Activated CD8-positive, alpha-beta T cell treated with anti-CD3 and anti-CD28 coated beads for 36 hours (primary cell): ENCODE measurements at regions of chr1 and their contacts with region 1.

Region 1: GRCh38 chr1:244864253-244865027 is at the start of gene HNRNPU:
- DNase-seq: peak; percentile 97
- ATAC-seq: peak; percentile 80
- H3K4me3 Mint-ChIP-seq: peak within 1 kb of the TSS; percentile 95
- H3K27ac Mint-ChIP-seq: peak within 1 kb of the TSS; percentile 99
- H3K4me1 Mint-ChIP-seq: peaks cover 34% of the 10 kb centered on the region
- H3K27me3 Mint-ChIP-seq: no peaks in the 10 kb centered on the region
- CTCF ChIP-seq: peak; percentile 54
- total RNA-seq, gene HNRNPU: 469 to 474 TPM

Region 2: GRCh38 chr1:244768186-244768585 is 96.3 kb before region 1 on chr1:
- CTCF ChIA-PET with region 1: no interaction called
- POLR2A ChIA-PET with region 1: no interaction called
- intact Hi-C with region 1: no loop called
- DNase-seq: no peak
- ATAC-seq: no peak
- H3K4me3 Mint-ChIP-seq: no peak overlapping the region
- H3K27ac Mint-ChIP-seq: no peak overlapping the region
- H3K4me1 Mint-ChIP-seq: no peaks in the 10 kb centered on the region
- H3K27me3 Mint-ChIP-seq: peaks cover 5% of the 10 kb centered on the region
- CTCF ChIP-seq: no peak

Region 3: GRCh38 chr1:244835276-244836134 is 28.9 kb before region 1 on chr1 and contains the start of gene COX20:
- CTCF ChIA-PET with region 1: interaction called, 15 read pairs
- POLR2A ChIA-PET with region 1: interaction called, 554 read pairs
- intact Hi-C with region 1: loop called (anchors 1 kb)
- DNase-seq: peak; percentile 88
- ATAC-seq: peak; percentile 61
- H3K4me3 Mint-ChIP-seq: peak within 1 kb of the TSS; percentile 93
- H3K27ac Mint-ChIP-seq: peak within 1 kb of the TSS; percentile 98
- H3K4me1 Mint-ChIP-seq: peaks cover 38% of the 10 kb centered on the region
- H3K27me3 Mint-ChIP-seq: no peaks in the 10 kb centered on the region
- CTCF ChIP-seq: no peak
- total RNA-seq, gene COX20: 33.1 to 34.7 TPM

Region 4: GRCh38 chr1:244849189-244849866 is 15.1 kb before region 1 on chr1:
- CTCF ChIA-PET with region 1: interaction called, 12 read pairs
- POLR2A ChIA-PET with region 1: interaction called, 554 read pairs
- intact Hi-C with region 1: no loop called
- DNase-seq: no peak
- ATAC-seq: no peak
- H3K4me3 Mint-ChIP-seq: no peak overlapping the region
- H3K27ac Mint-ChIP-seq: peak overlapping the region; percentile 46
- H3K4me1 Mint-ChIP-seq: peaks cover 75% of the 10 kb centered on the region
- H3K27me3 Mint-ChIP-seq: no peaks in the 10 kb centered on the region
- CTCF ChIP-seq: no peak

Region 5: DNA sequence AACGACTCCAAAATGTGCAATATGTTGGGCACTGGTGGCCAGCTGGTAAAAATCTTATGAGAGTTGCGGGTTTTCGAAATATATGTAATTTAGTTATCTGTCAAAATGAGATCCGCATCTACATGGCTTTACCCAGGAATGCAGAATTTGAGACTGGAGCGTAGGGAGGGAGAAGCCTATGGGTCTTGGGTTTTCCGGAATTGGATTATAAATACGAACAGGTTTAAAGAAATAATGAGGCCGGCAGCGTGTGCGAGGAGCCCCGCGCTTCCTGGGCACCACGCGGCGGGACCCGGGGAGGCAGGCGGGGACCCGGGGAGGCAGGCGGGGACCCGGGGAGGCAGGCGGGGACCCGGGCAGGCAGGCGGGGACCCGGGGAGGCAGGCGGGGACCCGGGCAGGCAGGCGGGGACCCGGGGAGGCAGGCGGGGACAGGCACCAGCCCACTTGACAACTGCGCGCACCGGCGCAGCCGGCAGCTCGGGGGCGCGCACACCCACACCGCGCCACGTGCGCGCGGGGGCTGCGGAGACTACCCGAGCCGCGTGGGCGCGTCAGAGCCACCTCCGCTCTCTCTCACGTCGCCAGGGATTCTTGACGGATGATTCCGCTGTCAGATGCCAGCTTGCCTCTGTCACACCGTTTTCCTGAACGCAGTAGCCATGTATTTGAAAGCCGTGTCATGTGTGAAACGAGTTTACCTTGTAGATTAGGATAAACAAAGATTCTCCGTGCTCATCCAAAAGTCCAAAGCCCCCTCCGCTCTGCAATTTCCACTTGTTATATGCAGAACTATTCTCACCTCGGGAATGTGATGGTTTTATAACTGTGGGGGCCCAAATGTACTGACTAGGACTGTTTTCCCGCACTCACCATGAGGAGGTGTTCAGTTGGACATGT is 54.2 kb after region 1 on chr1:
- CTCF ChIA-PET with region 1: no interaction called
- POLR2A ChIA-PET with region 1: interaction called, 15 read pairs
- intact Hi-C with region 1: no loop called
- DNase-seq: peak; percentile 57
- ATAC-seq: peak; percentile 84
- H3K4me3 Mint-ChIP-seq: peak overlapping the region; percentile 78
- H3K27ac Mint-ChIP-seq: peak overlapping the region; percentile 84
- H3K4me1 Mint-ChIP-seq: peaks cover 14% of the 10 kb centered on the region
- H3K27me3 Mint-ChIP-seq: peaks cover 2% of the 10 kb centered on the region
- CTCF ChIP-seq: no peak

Region 6: DNA sequence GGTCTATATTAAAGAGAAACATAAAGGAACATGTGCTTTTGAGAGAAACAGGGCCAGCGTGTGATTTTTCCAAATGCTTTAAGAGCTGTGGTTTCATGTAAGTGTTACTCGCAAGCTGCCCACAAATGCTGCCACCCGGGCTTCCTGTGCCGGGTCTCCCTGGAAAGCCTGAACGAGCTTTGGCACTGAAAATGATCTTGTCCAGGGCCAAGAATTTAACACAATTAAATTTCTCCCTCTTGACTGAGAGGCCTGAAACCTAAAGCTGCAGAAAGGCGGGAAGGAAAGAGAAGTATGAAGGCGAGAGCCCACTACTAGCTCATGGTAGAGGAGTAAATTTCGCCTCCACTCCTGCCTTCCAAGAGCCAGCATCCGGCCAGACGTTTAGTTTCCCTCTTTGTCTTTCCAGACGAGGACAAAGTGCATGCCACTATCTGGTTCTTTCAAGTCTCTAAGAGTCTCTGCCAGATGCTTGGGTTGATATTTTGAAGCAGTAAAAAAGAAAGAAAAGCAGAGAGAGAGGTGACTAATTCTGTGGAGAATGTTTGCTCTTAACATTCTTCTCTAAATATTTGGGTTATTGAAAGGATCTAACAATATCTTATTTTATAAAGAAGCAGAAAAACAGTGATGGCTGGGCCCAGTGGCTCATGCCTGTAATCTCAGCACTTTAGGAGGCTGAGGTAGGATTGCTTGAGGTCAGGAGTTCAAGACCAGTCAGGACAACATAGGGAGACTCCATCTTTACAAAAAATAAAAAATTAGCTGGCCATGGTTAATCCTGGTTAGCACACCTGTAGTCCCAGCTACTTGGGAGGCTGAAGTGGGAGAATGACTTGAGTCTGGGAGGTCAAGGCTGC is 99.9 kb after region 1 on chr1:
- CTCF ChIA-PET with region 1: interaction called, 12 read pairs
- POLR2A ChIA-PET with region 1: interaction called, 60 read pairs
- intact Hi-C with region 1: loop called (anchors 5 kb)
- DNase-seq: peak; percentile 43
- ATAC-seq: peak; percentile 49
- H3K4me3 Mint-ChIP-seq: no peak overlapping the region
- H3K27ac Mint-ChIP-seq: peak overlapping the region; percentile 55
- H3K4me1 Mint-ChIP-seq: peaks cover 15% of the 10 kb centered on the region
- H3K27me3 Mint-ChIP-seq: no peaks in the 10 kb centered on the region
- CTCF ChIP-seq: no peak

Region 7: DNA sequence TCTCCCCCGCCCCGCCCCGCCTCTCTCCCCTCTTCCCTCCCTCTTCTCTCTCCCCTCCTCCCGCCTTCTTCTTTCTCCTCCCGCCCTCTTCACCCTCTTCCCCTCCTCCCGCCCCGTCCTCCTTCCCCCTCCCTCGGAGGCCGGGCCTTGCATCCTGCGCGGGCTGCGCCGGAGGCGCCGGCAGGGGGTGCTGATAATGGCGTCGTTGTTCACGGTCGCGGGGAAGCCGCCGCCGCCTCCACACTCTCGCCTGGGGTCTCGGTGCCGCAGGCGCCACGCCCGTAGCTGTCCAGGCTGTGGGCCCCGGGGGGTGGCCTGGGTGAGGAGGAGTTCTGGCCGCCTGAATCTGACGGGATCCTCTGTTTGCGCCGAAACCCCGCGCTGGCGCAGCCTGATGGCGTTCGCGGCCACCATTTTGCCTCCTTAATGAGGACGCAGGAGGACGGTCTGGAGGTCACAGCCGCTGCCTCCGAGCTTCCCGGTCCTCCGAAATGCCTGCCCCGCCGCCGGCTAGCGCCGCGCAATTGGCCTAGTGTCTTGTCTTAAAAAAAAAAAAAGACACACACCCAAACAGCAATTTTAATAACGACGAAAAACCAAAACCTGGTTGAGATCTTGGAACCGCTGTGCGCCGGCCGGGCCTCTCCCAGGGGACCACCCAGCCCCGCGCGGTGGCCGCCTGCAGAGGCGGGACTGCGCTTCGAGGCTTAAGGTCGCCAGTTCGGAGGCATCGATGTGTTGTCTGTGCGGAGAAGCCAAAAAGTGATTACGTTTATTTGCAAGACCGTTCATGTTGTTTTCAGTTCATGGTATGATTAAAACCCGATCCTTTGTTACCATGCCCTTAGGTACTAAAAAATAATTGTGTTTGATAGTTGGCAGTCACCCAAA is 106.5 kb after region 1 on chr1:
- CTCF ChIA-PET with region 1: interaction called, 12 read pairs
- POLR2A ChIA-PET with region 1: interaction called, 60 read pairs
- intact Hi-C with region 1: no loop called
- DNase-seq: peak; percentile 94
- ATAC-seq: peak; percentile 87
- H3K4me3 Mint-ChIP-seq: peak overlapping the region; percentile 88
- H3K27ac Mint-ChIP-seq: peak overlapping the region; percentile 97
- H3K4me1 Mint-ChIP-seq: peaks cover 11% of the 10 kb centered on the region
- H3K27me3 Mint-ChIP-seq: no peaks in the 10 kb centered on the region
- CTCF ChIP-seq: peak; percentile 55